Activated CD4-positive, alpha-beta T cell treated with anti-CD3 and anti-CD28 coated beads for 36 hours (primary cell): ENCODE measurements at regions of chr11 and their contacts with region 1.

Region 1: DNA sequence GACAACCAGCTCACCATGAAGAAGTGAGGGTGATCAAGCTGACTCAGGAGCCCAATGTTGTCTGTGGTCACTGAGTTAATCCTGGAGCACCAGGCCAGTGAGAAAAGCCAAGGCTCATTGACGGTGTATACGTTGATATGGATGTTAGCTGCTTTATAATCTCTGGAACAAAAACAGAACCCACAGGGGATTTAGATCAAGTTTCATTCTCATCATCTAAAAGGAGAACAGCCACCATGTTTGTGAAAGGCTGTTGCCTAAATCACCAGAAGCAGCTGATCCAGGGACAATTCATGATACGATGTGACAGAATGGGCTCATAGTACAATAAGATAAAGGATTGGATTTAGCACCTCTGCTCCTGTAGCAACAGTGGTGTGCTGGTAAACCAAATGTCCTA is 68.5 kb downstream of the GDPD4 start:
- DNase-seq: no peak
- ATAC-seq: no peak
- H3K4me3 Mint-ChIP-seq: no peak overlapping the region
- H3K27ac Mint-ChIP-seq: no peak overlapping the region
- H3K4me1 Mint-ChIP-seq: no peaks in the 10 kb centered on the region
- H3K27me3 Mint-ChIP-seq: peaks cover 5% of the 10 kb centered on the region

Region 2: GRCh38 chr11:77053217-77054015 is 179.6 kb before region 1 on chr11:
- CTCF ChIA-PET with region 1: no interaction called
- POLR2A ChIA-PET with region 1: no interaction called
- intact Hi-C with region 1: loop called in 1 of 2 experiments (anchors 5 kb)
- DNase-seq: no peak
- ATAC-seq: no peak
- H3K4me3 Mint-ChIP-seq: no peak overlapping the region
- H3K27ac Mint-ChIP-seq: peak overlapping the region; percentile 1
- H3K4me1 Mint-ChIP-seq: peaks cover 2% of the 10 kb centered on the region
- H3K27me3 Mint-ChIP-seq: no peaks in the 10 kb centered on the region